Aorta (tissue), 5 donors: ENCODE measurements at regions of chr10 and their contacts with region 1.

Region 1: GRCh38 chr10:132637477-132638129 is 100.0 kb downstream of the INPP5A start:
- DNase-seq: no peak
- ATAC-seq: peak; percentile 77
- H3K4me3 ChIP-seq: no peak overlapping the region
- H3K27ac ChIP-seq: peak overlapping the region in 1 of 2 donors; percentile 55
- H3K4me1 ChIP-seq: peaks cover 0 to 6% of the 10 kb centered on the region in 2 donors
- H3K27me3 ChIP-seq: no peaks in the 10 kb centered on the region

Region 2: DNA sequence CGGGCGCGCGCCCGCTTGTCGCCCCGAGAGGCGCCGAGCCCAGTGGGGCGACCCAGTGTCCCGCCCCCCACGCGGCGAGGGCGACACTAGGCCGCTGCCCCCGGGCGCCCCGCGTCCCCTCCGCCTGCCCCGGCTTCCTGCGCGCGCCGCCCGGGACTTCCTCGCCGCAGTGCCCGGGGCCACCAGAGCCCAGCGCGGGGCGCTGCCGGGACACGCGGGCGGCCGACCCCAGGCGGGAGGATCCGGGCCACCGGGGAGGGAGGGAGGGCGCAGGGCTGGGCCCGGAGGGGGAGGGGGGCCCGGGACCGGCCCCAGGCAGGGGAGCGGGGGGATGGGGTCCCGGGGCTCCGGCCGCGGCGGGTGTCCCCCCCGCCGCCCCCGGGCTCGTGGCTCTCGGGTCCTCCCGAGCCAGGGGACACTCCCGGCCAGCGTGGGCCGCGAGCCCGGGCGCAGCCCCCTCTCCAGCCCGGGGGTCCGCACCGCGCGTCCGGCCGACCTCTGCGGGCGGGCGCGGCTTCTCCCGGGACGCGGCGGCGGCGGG is 241.0 kb before region 1 on chr10:
- intact Hi-C with region 1: loop called (anchors 10 kb)
- DNase-seq: peak; percentile 75 to 90
- ATAC-seq: peak; percentile 34
- H3K4me3 ChIP-seq: peak overlapping the region; percentile 59 to 76
- H3K27ac ChIP-seq: peak overlapping the region in 1 of 2 donors; percentile 28
- H3K4me1 ChIP-seq: no peaks in the 10 kb centered on the region
- H3K27me3 ChIP-seq: no peaks in the 10 kb centered on the region

Region 3: DNA sequence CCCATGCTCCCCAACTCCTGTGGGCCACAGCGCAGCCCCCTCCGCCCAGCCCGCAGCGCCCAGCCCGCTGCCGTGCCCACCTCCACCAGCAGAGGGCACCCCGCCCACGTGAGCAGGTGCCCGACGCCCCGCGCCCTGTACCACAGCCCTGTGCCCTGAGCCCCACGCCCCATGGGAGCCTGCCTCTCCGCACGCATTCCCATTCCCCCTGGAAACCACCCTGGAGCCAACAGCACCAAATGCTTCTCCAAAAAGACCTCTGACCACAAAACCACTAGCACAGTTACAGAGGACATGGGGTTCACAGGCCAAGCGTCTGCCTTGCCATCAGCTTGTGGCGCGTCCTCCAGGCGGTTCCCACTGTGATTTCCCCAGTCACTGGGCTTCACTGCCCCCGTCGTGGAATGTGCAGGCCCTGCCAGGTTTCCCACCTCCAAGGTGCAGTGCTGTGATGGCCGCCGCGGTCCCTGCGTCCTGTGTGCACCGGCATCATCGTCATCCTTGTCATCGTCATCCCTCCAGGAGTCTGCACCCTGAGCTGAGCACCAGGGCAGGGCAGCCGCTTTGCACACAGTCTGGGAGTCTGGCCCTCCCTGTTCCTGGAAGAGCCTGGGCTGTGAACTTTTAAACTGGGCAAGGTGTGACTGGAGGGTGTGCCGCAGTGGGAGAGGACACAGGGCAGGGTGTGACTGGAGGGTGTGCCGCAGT is 178.9 kb before region 1 on chr10:
- intact Hi-C with region 1: loop called (anchors 1 to 2 kb)
- DNase-seq: peak; percentile 64 to 89
- ATAC-seq: peak; percentile 70
- H3K4me3 ChIP-seq: no peak overlapping the region
- H3K27ac ChIP-seq: no peak overlapping the region
- H3K4me1 ChIP-seq: no peaks in the 10 kb centered on the region
- H3K27me3 ChIP-seq: no peaks in the 10 kb centered on the region

Region 4: DNA sequence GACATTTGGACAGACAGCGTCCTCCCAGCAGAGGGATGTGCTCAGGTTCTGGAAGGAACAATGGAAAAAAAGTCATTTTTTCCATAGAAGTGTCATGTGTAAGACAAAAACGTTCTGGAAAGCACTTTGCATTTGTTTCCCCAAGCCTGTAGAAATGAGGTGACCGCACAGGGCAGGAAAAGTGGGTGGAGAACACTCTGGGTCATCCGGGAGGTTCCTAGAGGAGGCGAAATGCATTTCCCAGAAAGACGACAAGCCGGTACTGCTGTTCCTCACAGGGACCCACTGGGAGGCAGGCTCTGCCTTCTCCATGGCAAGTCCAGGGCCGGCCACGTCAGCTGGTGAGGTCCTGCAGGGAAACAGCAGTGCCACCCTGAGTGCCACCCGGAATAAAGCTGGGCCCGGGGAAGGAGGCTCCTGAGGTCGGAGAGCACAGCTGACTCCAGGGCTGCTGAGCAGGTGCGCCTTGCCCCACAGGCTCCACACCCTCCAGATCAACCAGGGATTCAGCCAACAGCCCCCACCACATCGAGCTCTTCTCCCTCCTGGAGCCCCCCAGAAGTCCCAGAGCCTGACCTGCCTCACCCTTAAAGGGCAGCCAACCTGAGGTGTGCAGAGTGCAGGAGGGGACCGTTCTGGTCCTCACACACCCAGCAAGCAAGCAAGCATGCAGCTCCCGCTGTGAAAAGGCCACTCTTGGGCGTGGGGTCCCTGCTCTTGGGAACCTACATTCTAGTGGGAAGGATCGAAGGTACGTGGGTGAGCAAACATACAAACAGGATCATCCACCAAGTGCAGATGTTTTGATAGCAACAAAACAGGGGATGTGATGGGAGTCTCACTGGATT is 128.8 kb before region 1 on chr10:
- intact Hi-C with region 1: loop called (anchors 2 kb)
- DNase-seq: peak; percentile 85 to 92
- ATAC-seq: peak; percentile 74
- H3K4me3 ChIP-seq: no peak overlapping the region
- H3K27ac ChIP-seq: no peak overlapping the region
- H3K4me1 ChIP-seq: no peaks in the 10 kb centered on the region
- H3K27me3 ChIP-seq: no peaks in the 10 kb centered on the region

Region 5: DNA sequence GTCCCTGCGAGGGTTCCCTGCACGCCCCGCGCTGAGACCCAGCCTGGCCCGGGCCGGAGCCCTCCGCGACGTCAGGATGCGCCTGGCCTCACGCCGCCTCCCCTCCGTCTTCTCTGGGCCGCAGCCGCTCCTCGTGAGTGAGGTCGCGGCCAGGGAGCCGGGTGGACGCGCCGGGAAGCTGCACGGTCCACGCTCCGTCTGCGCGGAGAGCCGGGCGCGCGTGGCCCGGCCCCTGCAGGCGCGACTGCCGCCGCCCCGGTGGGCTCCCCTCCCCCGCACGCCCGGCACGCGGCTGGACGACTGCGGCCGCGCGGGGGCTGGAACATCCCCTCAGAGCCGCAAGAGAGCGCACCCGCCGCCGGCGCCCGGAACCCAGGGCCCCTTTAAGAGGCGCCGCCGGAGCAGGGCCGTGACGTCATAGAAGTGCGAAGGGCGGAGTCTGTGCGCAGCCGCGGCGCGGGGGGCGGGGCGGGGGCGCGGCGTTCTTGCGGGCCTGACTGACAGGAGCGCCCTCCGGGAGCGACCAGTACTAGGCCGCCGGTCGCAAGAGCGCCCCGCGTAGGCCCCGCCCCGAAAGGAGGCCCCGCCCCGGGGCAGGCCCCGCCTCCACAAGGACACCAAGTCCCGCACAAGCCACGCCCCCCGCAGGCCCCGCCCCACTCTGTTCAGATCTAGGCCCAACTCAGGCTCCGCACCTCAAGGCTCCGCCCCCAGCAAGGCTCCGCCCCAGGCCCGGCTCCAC is 100.5 kb before region 1 on chr10:
- intact Hi-C with region 1: loop called in 1 of 2 experiments (anchors 5 kb)
- DNase-seq: peak; percentile 100
- ATAC-seq: peak; percentile 98
- H3K4me3 ChIP-seq: peak overlapping the region; percentile 20 to 53
- H3K27ac ChIP-seq: peak overlapping the region in 1 of 2 donors; percentile 37
- H3K4me1 ChIP-seq: no peaks in the 10 kb centered on the region
- H3K27me3 ChIP-seq: no peaks in the 10 kb centered on the region

Region 6: DNA sequence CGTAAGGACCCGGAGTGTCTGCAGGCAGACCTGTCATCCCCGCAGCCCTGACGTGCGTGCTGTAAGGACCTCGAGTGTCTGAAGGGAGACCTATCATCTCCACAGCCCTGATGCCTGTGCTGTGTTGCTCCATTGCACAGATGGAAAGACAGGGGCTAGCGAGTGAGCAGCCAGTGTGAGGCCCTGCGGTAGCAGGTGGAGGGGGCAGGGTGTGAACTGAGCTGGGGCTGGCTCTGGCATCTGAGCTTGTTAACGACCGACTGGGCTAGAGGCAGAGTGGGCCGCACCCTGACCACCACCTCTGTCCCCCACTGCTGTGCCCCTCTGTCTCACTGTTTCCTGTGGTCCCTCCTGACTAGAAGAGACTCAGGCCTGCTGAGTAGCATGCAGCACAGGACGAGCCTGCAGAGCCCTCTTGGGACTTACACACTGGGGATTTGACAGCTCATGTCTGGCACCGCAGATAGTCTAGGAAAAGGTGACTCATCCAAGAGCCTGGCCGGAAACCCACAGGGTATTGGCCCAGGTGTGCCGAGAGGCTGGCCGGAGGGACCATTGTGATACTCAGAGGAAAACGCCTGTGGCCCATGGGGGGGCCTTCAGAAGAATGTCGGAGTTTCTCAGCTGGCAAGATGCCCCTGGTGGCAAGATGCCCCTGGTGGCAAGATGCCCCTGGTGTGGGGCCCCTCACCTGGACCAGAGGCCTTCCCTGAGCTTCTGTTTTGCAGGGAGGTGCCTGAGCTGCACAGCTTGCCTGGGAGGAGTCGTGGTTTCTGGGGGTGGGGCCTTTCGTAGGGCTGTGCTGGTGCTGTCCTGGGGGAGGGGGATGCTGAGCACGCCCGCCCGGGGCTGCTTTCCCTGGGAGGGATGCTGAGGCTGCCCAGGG is 65.7 kb before region 1 on chr10:
- intact Hi-C with region 1: loop called in 1 of 2 experiments (anchors 5 kb)
- DNase-seq: peak; percentile 56 to 82
- ATAC-seq: peak; percentile 53
- H3K4me3 ChIP-seq: no peak overlapping the region
- H3K27ac ChIP-seq: peak overlapping the region in 1 of 2 donors; percentile 25
- H3K4me1 ChIP-seq: peaks cover 0 to 2% of the 10 kb centered on the region in 2 donors
- H3K27me3 ChIP-seq: no peaks in the 10 kb centered on the region

Region 7: GRCh38 chr10:132700156-132701098 is 62.8 kb after region 1 on chr10:
- intact Hi-C with region 1: no loop called
- DNase-seq: peak; percentile 54 to 79
- ATAC-seq: peak; percentile 39
- H3K4me3 ChIP-seq: no peak overlapping the region
- H3K27ac ChIP-seq: no peak overlapping the region
- H3K4me1 ChIP-seq: no peaks in the 10 kb centered on the region
- H3K27me3 ChIP-seq: no peaks in the 10 kb centered on the region

Region 8: GRCh38 chr10:132793871-132794849 is 156.6 kb after region 1 on chr10:
- intact Hi-C with region 1: no loop called
- DNase-seq: no peak
- ATAC-seq: no peak
- H3K4me3 ChIP-seq: no peak overlapping the region
- H3K27ac ChIP-seq: no peak overlapping the region
- H3K4me1 ChIP-seq: no peaks in the 10 kb centered on the region
- H3K27me3 ChIP-seq: no peaks in the 10 kb centered on the region